Activated CD4-positive, alpha-beta T cell treated with anti-CD3 and anti-CD28 coated beads, Interleukin-2, amount 10 ng/mL, durations not matched to agents 24 days and 14 days (primary cell): ENCODE measurements at regions of chr4 and their contacts with region 1.

Region 1: DNA sequence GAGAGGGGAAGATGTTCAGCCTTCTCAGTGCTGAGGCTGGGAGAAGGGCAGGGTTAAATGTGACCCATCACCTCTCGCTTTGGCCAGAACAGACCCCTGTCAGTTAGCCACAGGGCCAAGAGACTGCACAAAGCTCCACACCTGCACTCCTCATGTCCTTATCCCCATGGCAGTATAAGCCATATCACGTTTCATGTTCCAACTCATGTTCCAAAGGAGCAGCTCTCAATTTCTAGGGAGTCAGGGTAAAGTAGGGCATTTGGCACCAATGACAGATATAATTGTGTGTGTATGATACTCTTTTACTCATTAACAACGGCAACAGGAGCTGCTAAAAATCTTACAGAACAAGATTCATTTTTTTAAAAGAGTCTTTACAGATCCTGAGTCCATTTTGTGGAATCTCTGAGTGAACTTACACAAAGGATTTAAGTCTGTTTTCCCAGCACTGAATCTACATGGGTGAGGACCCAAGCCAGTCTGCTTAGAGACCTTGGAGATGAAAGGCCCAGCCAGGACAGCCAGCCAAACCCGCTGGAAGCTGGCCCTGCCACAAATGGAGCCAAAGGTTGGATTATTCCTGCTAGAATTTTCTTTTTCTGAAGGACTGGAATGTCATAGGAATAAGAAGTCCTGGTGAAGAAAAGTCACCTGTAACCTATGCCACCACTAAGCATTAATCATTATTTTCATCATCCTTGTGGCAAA is 129.1 kb upstream of the SMAD1 start:
- DNase-seq: no peak
- H3K4me3 Mint-ChIP-seq: no peak overlapping the region
- H3K27ac Mint-ChIP-seq: no peak overlapping the region
- H3K4me1 Mint-ChIP-seq: no peaks in the 10 kb centered on the region
- H3K27me3 Mint-ChIP-seq: peaks cover 2% of the 10 kb centered on the region

Region 2: GRCh38 chr4:145248971-145249370 is 103.6 kb before region 1 on chr4:
- intact Hi-C with region 1: loop called (anchors 10 kb)
- DNase-seq: no peak
- H3K4me3 Mint-ChIP-seq: no peak overlapping the region
- H3K27ac Mint-ChIP-seq: no peak overlapping the region
- H3K4me1 Mint-ChIP-seq: no peaks in the 10 kb centered on the region
- H3K27me3 Mint-ChIP-seq: peaks cover 11% of the 10 kb centered on the region

Region 3: DNA sequence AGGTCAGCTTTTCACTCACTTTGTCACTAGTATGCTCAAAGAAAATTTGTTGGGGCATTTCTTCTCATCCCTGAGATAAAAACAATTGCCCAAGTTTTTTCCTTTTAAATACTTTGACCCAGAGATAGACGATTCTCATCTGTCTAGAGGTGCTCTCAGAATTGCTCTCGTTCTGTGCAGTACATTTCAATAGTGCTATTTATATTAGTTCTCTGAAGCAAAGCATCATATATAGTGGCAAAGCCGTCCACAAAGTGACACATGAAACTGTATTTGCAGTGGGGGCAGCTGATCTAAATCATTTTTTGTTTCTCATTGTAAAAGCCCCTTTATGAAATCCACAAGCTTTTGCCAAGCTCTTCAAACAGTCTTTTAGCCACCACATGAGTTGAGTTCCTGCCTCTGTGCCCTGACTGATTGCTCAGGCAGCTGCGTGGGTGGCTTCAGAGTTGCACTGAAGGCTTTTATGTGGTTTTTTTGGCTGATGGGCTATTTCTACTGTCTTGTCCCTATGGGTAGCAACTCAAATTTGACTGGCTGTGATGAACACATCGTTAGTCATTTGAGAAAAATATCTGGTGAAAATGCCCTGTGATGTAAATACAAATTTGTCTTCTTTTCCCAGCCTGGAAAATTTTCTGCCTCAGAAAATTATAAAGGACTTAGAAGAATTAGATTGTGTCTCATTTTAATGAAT is 53.1 kb before region 1 on chr4:
- intact Hi-C with region 1: no loop called
- DNase-seq: peak; percentile 74
- H3K4me3 Mint-ChIP-seq: no peak overlapping the region
- H3K27ac Mint-ChIP-seq: no peak overlapping the region
- H3K4me1 Mint-ChIP-seq: peaks cover 11% of the 10 kb centered on the region
- H3K27me3 Mint-ChIP-seq: peaks cover 14% of the 10 kb centered on the region

Region 4: DNA sequence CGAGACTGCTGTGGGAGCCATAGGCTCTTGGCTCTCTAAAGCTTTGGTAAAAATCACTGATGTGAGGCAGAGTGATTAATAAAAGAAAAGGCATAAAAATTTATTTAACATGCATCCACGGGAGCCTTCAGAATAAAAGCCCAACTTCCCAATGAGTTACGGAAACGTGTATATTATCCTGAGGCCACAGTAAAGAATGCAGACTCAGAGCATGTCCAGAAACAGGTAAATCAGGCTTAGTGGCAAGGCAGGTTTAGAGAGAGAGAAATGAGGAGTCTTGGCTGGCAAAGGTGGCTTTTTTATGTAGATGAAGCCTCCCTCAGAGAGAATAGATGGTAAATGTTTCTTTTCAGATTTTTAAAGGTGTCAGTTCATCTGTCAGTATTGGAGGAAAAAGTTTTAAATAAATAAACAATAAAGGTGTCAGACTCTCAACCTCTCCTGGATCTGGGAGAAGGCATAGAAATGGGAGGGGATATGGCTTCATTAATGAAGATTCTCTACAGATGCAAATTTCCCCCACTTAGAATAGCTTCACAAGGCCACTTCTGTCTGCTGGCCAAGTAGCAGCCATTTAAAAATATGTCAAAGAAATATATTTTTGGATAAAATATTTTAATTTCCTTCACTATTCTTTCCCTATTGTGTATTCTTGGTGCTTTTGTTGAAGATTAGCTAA is 351.4 kb after region 1 on chr4:
- intact Hi-C with region 1: no loop called
- DNase-seq: no peak
- H3K4me3 Mint-ChIP-seq: no peak overlapping the region
- H3K27ac Mint-ChIP-seq: no peak overlapping the region
- H3K4me1 Mint-ChIP-seq: peaks cover 6% of the 10 kb centered on the region
- H3K27me3 Mint-ChIP-seq: peaks cover 7% of the 10 kb centered on the region